Endothelial cell of umbilical vein (primary cell): ENCODE measurements at regions of chr3 and their contacts with region 1.

Region 1: DNA sequence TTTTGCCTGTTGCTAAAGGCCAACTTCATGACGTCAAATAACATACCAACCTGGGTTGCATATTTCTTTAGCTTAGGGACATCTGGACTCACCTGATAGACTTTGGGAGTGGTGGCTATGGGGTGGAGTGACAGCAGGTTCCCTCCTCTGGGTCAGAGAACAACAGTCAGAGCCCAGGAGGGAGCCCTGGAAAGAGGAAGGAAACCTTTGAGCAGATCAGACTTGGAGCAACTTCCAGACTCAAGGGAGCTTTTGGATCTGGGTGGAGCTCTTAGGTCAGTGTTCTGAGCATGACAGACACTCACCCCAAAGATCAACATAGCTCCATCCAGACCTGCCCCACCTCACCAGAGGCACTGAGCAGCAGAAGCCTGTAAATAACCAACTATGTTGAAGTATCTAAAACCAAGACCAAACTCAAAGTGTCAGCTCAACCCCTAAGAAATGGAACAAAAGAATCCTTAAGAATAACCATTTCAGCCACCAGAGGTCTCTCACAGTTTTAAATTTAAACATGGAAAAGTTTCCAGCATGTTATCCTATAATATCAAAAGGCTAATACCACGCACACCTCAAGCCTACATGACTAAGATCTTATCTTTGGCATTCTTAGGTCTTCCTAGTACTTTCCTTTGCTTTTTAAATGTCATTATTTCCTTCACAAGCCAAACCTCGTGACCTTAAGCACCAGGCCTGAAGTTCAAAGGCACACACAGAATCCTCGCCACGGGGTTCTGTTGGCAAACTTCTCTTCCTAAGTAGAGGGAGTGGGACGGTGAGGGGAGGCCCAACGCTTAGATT is 56.4 kb downstream of the UMPS start:
- DNase-seq: peak; percentile 50
- H3K4me3 ChIP-seq: no peak overlapping the region
- H3K27ac ChIP-seq: no peak overlapping the region
- H3K4me1 ChIP-seq: peaks cover 6% of the 10 kb centered on the region
- H3K27me3 ChIP-seq: no peaks in the 10 kb centered on the region
- CTCF ChIP-seq: no peak
- POLR2A ChIP-seq: no peak

Region 2: DNA sequence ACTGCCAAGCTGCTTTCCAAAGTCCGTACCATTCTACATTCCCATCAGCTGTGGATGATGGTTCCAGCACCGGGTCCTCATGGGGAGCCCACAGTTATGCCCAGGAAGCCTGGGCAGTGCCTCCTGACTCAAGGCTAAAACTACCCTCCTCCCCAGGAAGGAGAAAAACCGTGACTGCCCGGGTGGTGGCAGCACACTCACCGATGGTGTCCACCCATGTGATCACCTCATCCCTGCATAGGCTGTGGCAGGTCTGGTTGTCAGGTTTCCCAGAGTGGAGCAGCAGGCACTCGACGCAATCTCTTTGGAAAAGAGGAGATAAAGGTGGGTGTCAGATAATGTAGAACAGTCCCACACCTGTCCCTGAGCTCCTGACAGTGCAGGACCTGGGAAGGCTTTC is 17.8 kb before region 1 on chr3:
- CTCF ChIA-PET with region 1: interaction called, 112 read pairs
- POLR2A ChIA-PET with region 1: no interaction called
- dilution Hi-C with region 1: no loop called
- intact Hi-C with region 1: no loop called
- DNase-seq: no peak
- H3K4me3 ChIP-seq: no peak overlapping the region
- H3K27ac ChIP-seq: no peak overlapping the region
- H3K4me1 ChIP-seq: peaks cover 31% of the 10 kb centered on the region
- H3K27me3 ChIP-seq: no peaks in the 10 kb centered on the region
- CTCF ChIP-seq: peak in 1 of 2 donors; percentile 26
- POLR2A ChIP-seq: no peak

Region 3: GRCh38 chr3:124800511-124801258 is 14.0 kb after region 1 on chr3:
- CTCF ChIA-PET with region 1: interaction called, 24 read pairs
- POLR2A ChIA-PET with region 1: no interaction called
- dilution Hi-C with region 1: no loop called
- intact Hi-C with region 1: no loop called
- DNase-seq: peak; percentile 76
- H3K4me3 ChIP-seq: no peak overlapping the region
- H3K27ac ChIP-seq: no peak overlapping the region
- H3K4me1 ChIP-seq: peaks cover 8% of the 10 kb centered on the region
- H3K27me3 ChIP-seq: no peaks in the 10 kb centered on the region
- CTCF ChIP-seq: no peak
- POLR2A ChIP-seq: no peak

Region 4: GRCh38 chr3:124826703-124827102 is 40.1 kb after region 1 on chr3:
- CTCF ChIA-PET with region 1: interaction called, 19 read pairs
- POLR2A ChIA-PET with region 1: interaction called, 4 read pairs
- dilution Hi-C with region 1: no loop called
- intact Hi-C with region 1: no loop called
- DNase-seq: peak; percentile 74
- H3K4me3 ChIP-seq: no peak overlapping the region
- H3K27ac ChIP-seq: no peak overlapping the region
- H3K4me1 ChIP-seq: peaks cover 3% of the 10 kb centered on the region
- H3K27me3 ChIP-seq: no peaks in the 10 kb centered on the region
- CTCF ChIP-seq: no peak
- POLR2A ChIP-seq: no peak

Region 5: GRCh38 chr3:124845406-124845805 is 58.8 kb after region 1 on chr3:
- CTCF ChIA-PET with region 1: interaction called, 26 read pairs
- POLR2A ChIA-PET with region 1: no interaction called
- dilution Hi-C with region 1: no loop called
- intact Hi-C with region 1: no loop called
- DNase-seq: peak; percentile 70
- H3K4me3 ChIP-seq: no peak overlapping the region
- H3K27ac ChIP-seq: peak overlapping the region; percentile 11
- H3K4me1 ChIP-seq: peaks cover 9% of the 10 kb centered on the region
- H3K27me3 ChIP-seq: no peaks in the 10 kb centered on the region
- CTCF ChIP-seq: no peak
- POLR2A ChIP-seq: no peak

Region 6: DNA sequence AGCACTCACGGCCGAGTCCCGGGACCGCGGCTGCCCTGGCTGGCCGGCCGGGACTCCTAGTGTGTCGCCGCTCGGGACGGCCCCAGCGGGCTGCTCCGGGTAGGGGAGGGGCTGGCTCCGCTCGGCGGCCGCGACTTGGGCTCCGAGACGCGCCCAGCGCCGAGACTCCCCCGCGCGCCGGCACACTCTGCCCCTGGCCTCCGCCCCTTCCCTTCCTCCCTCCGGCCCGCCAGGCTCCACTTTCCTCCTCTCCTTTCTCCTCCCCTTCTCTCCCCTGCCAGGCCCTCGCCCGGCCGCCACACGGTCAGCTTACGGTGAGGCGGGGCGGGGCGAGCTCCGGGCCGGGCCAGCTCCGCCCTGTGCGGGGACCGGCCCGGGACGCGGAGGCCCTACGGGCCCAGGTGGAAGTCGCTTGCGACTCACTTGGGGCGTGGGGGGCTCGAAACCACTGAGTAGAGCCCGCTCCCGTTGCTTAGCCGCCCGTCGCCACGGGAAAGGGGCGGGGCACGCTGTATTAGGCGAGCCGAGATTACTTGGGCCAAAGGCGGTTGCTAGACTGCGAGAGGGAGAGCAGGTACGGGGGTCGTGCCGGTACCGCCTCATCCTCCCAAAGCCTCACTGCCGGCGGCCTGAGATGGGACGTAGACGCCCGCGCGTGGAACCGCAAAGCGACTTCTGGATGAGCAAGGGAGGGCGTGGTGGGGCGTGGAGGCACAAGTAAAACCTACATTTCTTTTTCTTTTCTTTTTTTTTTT is 100.7 kb after region 1 on chr3 and contains the start of gene ITGB5:
- CTCF ChIA-PET with region 1: interaction called, 29 read pairs
- POLR2A ChIA-PET with region 1: no interaction called
- dilution Hi-C with region 1: no loop called
- intact Hi-C with region 1: loop called (anchors 2 kb)
- DNase-seq: peak; percentile 72
- H3K4me3 ChIP-seq: peak within 1 kb of the TSS; percentile 36 to 73 (median 47)
- H3K27ac ChIP-seq: peak within 1 kb of the TSS; percentile 57
- H3K4me1 ChIP-seq: peaks cover 23% of the 10 kb centered on the region
- H3K27me3 ChIP-seq: no peaks in the 10 kb centered on the region
- CTCF ChIP-seq: no peak
- POLR2A ChIP-seq: peak; percentile 57
- total RNA-seq, gene ITGB5: 144 TPM in 2 replicates

Region 7: GRCh38 chr3:124905849-124906248 is 119.2 kb after region 1 on chr3:
- CTCF ChIA-PET with region 1: interaction called, 289 read pairs
- POLR2A ChIA-PET with region 1: no interaction called
- dilution Hi-C with region 1: no loop called
- intact Hi-C with region 1: loop called (anchors 1 kb)
- DNase-seq: no peak
- H3K4me3 ChIP-seq: no peak overlapping the region
- H3K27ac ChIP-seq: no peak overlapping the region
- H3K4me1 ChIP-seq: no peaks in the 10 kb centered on the region
- H3K27me3 ChIP-seq: peaks cover 26 to 27% of the 10 kb centered on the region in 2 experiments
- CTCF ChIP-seq: no peak
- POLR2A ChIP-seq: no peak